Activated naive CD4-positive, alpha-beta T cell treated with anti-CD3 and anti-CD28 coated beads for 36 hours (primary cell): ENCODE measurements at regions of chr17 and their contacts with region 1.

Region 1: DNA sequence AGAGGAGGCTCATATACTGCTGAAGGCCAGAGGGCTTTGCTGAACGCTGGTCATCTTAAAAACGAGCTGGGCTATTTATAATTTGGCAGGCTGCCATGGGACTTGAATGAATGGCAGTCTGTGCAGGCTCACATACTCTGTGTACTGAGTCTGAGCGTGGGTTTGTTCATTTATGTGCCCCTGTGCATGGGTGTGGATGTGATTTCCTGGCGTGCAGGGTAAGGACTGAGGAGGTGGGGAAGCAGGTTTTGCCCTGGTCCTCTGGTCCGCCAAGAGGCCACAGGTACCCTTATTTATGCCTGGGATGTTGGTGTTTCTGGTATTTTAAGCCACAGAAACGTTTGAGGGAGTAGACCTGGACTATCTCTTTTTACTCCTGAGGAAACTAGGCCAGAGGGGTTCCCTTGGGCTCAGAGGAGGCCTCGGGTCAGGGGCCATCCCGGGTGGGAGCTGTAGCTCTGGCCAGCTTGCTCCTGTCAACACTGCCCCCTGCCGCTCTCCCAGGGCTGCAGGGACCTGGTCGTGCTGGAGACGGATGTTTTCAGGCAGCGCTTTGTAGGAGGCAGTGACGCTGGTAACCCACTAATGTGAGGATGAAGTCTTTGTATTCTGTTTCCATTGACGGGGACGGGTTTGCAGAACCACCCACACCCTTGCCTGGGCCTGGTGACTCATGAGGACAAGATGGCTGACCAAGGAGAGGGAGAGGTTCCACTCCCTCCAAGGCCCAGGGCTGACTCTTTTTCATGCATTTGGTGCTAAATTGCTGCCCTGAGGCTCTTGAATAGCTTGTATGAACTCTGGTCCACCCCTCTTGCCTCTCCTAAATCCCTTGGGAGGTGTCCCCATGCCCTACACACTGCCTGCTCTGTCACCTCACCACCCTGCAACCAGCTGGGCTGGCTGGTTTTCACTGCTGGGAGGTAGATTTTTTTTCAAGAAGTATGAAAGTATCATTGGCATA is 184.5 kb downstream of the MSI2 start:
- DNase-seq: peak; percentile 93
- H3K4me3 Mint-ChIP-seq: no peak overlapping the region
- H3K27ac Mint-ChIP-seq: peak overlapping the region; percentile 92
- H3K4me1 Mint-ChIP-seq: peaks cover 80% of the 10 kb centered on the region
- H3K27me3 Mint-ChIP-seq: no peaks in the 10 kb centered on the region

Region 2: GRCh38 chr17:57255776-57256681 is 184.8 kb before region 1 on chr17 and contains the start of gene MSI2:
- CTCF ChIA-PET with region 1: interaction called, 11 read pairs
- intact Hi-C with region 1: loop called (anchors 1 kb)
- DNase-seq: peak; percentile 88
- H3K4me3 Mint-ChIP-seq: peak within 1 kb of the TSS; percentile 90
- H3K27ac Mint-ChIP-seq: peak within 1 kb of the TSS; percentile 86
- H3K4me1 Mint-ChIP-seq: peaks cover 38% of the 10 kb centered on the region
- H3K27me3 Mint-ChIP-seq: no peaks in the 10 kb centered on the region
- total RNA-seq, gene MSI2: 38.8 to 39.0 TPM

Region 3: GRCh38 chr17:57422574-57423164 is 18.1 kb before region 1 on chr17:
- CTCF ChIA-PET with region 1: interaction called, 10 read pairs
- intact Hi-C with region 1: no loop called
- DNase-seq: no peak
- H3K4me3 Mint-ChIP-seq: no peak overlapping the region
- H3K27ac Mint-ChIP-seq: no peak overlapping the region
- H3K4me1 Mint-ChIP-seq: peaks cover 36% of the 10 kb centered on the region
- H3K27me3 Mint-ChIP-seq: no peaks in the 10 kb centered on the region

Region 4: GRCh38 chr17:57463103-57463851 is 22.5 kb after region 1 on chr17:
- CTCF ChIA-PET with region 1: interaction called, 8 read pairs
- intact Hi-C with region 1: loop called (anchors 1 kb)
- DNase-seq: peak; percentile 94
- H3K4me3 Mint-ChIP-seq: peak overlapping the region; percentile 8
- H3K27ac Mint-ChIP-seq: peak overlapping the region; percentile 73
- H3K4me1 Mint-ChIP-seq: peaks cover 59% of the 10 kb centered on the region
- H3K27me3 Mint-ChIP-seq: no peaks in the 10 kb centered on the region

Region 5: DNA sequence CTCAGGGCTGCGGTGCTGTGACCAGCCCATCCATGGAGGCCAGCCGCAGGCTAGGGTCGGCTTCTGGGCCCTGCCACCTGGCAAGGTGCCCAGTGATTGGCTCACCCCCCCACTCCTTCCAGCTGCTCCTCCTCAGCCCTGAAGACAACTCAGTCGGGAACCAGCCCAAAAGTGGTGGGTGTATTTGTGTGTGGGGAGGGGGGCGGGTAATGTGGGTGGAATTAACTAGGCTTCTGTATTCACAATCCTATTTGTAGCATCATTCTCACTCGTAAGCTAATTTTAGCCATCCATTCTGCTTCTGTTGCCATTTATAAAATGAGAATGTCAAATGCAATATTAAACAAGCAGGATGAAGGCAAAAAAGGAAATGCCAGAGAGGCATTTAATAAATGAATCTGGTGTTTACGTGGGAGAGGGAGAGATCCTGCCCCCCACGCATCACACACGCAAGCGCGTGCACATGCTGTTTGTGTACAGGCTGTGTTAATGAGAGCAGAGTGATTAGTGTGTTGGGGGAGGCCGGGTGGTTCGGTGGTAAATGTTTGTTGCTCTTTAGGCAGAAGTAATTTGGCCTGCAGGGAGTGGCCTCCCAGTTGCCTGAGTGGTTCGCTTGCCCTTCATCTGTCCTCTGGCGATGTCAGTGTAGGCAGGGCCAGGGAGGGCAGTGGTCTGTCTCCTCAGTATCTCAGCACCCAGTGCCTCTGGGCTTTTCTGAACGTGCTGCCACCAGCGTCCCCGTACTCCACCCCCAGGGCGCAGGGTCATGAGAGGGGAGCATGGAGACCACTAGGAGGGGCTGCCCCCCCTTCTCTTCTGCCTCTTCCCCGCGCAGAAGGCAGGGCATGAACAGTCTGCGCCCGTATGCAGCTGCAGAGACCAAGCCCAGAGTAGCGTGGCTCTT is 164.2 kb after region 1 on chr17:
- CTCF ChIA-PET with region 1: no interaction called
- intact Hi-C with region 1: loop called (anchors 1 kb)
- DNase-seq: peak; percentile 63
- H3K4me3 Mint-ChIP-seq: peak overlapping the region; percentile 36
- H3K27ac Mint-ChIP-seq: peak overlapping the region; percentile 94
- H3K4me1 Mint-ChIP-seq: peaks cover 81% of the 10 kb centered on the region
- H3K27me3 Mint-ChIP-seq: no peaks in the 10 kb centered on the region